AG04449 (cell line): ENCODE measurements at regions of chr17 and their contacts with region 1.

Region 1: DNA sequence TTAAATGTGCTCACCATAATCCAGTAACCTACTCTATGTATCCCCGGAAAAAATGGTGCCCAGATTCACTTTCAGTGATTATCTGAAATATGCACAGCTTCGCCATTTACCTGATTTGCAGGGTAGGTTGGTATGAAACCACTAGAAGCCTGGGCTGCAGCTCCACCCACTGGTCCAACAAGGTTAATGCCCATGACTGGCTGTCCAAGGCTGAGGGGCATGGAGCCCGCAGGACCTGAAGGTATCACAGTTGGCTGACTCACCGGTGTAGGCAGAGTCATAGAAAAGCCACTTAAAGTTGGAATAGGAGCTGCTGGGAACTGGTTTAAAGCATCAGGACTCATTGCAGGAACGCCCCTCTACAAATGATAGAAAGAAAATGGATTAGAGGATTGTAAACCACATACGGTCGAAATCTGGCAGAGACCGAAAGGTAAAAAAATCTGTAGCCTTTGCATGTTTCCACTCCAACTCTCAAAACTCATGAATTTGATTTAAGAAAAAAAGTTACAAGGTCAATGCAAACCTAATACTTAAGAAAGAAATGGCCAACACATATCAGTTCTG is 38.6 kb downstream of the SYNRG start:
- DNase-seq: no peak
- H3K4me3 ChIP-seq: no peak overlapping the region
- CTCF ChIP-seq: peak; percentile 62

Region 2: GRCh38 chr17:37488009-37488604 is 82.5 kb before region 1 on chr17:
- CTCF ChIA-PET with region 1: no interaction called
- POLR2A ChIA-PET with region 1: no interaction called
- DNase-seq: peak; percentile 99
- H3K4me3 ChIP-seq: peak overlapping the region; percentile 89
- CTCF ChIP-seq: no peak

Region 3: DNA sequence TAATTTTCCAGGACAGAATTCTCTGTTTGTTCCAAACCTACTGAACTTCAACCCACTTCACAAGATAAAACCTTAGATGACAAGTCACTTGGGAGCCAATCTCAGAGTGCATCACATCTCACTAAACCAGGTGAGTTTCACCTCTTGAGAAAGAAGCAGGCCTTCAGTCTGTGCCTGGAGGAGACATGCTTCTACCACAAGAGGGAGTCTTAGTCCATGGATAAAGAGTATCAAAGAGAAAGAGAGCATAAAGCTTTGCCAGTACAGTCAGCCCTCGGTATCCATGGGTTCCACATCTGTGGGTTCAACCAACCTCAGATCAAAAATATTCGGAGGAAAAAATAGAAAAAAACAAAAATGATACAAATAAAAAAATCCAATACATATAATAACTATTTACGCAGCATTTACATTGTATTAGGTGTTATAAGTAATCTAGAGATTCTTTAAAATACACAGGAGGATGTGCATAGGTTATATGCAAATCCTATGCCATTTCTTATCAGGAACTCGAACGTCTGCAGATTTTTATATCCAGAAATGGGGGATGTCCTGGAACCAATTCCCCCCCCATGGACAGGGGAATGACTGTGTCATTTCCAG is 43.3 kb before region 1 on chr17:
- CTCF ChIA-PET with region 1: interaction called, 16 read pairs
- POLR2A ChIA-PET with region 1: no interaction called
- DNase-seq: no peak
- H3K4me3 ChIP-seq: no peak overlapping the region
- CTCF ChIP-seq: peak; percentile 67

Region 4: DNA sequence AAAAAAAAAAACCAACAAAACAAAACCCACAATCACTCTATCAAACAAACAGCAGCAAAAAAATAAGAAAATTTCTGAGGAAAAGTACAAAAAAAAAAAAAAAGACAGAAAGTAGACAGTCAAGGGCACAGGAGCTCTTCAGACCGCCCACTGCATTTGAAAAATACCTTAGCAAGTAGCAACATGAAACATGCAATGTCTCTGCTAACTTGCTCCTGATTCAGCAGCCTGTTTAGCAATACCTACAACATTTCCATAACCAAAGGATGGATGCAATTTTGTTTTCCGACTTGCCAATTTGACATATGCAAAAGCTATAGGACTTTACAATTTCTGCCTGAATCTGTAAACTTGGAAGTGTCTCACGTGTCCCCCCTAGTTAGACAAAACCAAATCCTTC is 18.8 kb before region 1 on chr17:
- CTCF ChIA-PET with region 1: interaction called, 53 read pairs
- POLR2A ChIA-PET with region 1: no interaction called
- DNase-seq: no peak
- H3K4me3 ChIP-seq: no peak overlapping the region
- CTCF ChIP-seq: no peak

Region 5: DNA sequence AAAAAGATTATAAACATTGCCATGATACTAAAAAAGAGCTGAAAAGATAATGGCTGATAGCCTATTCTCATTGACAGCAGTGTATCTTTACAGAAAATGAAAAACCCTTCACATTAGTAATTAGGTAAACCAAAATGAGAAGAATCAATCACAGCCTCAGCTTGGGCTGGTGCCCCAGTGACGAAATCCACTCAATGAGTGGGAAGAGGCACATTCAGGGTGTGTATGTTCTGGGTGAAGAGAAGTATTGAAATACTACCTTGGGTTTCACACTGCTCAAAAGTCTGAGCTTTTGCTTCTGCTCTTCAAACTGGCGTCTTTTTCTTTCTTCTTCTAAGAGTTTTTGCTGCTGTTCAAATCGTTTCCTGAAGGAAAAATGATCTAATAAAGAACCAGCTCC is 14.5 kb after region 1 on chr17:
- CTCF ChIA-PET with region 1: interaction called, 14 read pairs
- POLR2A ChIA-PET with region 1: no interaction called
- DNase-seq: no peak
- H3K4me3 ChIP-seq: no peak overlapping the region
- CTCF ChIP-seq: no peak